ENCODE measurements at regions of chr14 and their contacts with region 1.

Region 1: DNA sequence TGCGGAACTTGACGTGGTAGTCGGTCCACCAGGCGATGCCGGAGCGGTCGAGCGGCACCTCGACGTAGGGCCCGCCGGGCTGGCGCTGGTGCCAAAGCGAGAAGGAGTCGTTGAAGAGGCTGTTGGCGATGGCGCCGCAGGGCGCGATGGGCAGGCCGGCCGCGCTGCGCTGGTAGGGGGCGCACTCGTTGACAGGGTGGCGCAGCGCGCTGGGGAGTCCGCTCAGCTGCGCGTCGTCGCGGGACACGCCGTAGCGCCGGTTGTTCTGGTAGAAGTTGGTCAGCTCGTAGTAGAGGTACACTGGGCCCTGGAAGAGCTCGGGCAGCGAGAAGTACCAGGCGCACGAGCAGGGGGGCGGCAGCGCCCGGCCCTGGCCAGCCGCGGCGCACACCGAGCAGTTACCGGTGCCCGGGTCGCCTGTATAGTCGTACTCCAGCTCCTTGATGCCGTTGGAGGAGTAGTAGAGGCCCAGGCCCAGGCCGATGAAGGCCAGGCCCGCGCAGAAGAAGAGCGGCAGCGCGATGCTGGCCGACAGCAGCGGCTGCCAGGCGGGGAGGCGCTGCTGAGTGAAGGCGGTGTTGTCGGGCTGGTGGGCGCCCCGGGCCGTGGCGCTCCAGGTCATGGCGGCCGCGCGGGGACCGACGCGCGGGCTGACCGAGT is 482 bp downstream of the TMEM30B start:
- DNase-seq: no peak
- H3K4me3 ChIP-seq: peak overlapping the region; percentile 45
- CTCF ChIP-seq: peak; percentile 45

Region 2: GRCh38 chr14:61269321-61270083 is 11.2 kb before region 1 on chr14:
- CTCF ChIA-PET with region 1: interaction called, 90 read pairs
- POLR2A ChIA-PET with region 1: no interaction called
- DNase-seq: no peak
- H3K4me3 ChIP-seq: peak overlapping the region; percentile 59
- CTCF ChIP-seq: peak; percentile 67

Region 3: DNA sequence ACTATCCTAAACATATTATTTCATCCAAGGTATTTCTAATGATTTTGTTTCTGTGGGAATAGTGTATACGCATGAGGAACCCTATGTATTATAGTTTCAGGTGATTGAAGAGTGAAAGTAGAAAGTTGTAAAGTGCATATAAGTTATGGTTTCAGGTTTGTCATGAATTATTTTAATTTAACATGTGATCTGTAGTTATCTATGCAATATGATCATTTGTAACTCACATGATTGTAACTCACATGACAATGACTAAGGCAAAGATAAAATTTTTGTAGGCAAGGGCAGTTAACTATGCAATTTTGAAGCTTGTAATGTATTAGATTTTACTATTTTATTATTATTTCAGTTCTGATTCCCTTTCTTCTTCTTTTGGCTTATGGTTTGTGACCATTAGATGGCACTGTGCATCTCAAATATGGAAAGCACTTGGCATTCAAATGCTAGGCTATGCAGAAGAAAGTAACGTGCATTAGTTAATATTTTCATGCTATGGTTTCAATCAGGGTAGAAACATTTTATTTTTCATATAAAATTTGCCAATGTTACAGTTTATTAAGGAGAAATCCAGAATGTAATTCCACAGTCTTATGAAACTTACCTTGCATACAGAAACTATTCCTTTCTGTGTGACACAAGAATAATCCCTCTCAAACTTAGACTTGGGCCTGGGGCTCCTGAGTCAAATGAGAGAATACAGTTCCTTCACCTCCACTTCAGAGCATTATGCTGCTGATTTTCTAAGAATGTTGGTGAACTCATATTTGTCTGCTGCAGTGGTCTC is 16.3 kb after region 1 on chr14:
- CTCF ChIA-PET with region 1: interaction called, 30 read pairs
- POLR2A ChIA-PET with region 1: no interaction called
- DNase-seq: peak; percentile 10
- H3K4me3 ChIP-seq: no peak overlapping the region
- CTCF ChIP-seq: peak; percentile 55

Measured in AG04449 (cell line).